Testis (tissue), 5 donors: ENCODE measurements at regions of chr2 and their contacts with region 1.

Region 1: GRCh38 chr2:147049957-147050356 is 794.9 kb upstream of the ACVR2A start:
- DNase-seq: no peak
- H3K4me3 ChIP-seq: no peak overlapping the region
- H3K27ac ChIP-seq: no peak overlapping the region
- H3K4me1 ChIP-seq: no peaks in the 10 kb centered on the region
- H3K27me3 ChIP-seq: no peaks in the 10 kb centered on the region
- CTCF ChIP-seq: no peak
- POLR2A ChIP-seq: no peak

Region 2: GRCh38 chr2:146986161-146986560 is 63.8 kb before region 1 on chr2:
- intact Hi-C with region 1: loop called (anchors 2 kb)
- DNase-seq: no peak
- H3K4me3 ChIP-seq: no peak overlapping the region
- H3K27ac ChIP-seq: no peak overlapping the region
- H3K4me1 ChIP-seq: no peaks in the 10 kb centered on the region
- H3K27me3 ChIP-seq: no peaks in the 10 kb centered on the region
- CTCF ChIP-seq: no peak
- POLR2A ChIP-seq: no peak